GM12878 (cell line): ENCODE measurements at regions of chr20 and their contacts with region 1.

Region 1: GRCh38 chr20:53891306-53891944 is 179.0 kb downstream of the BCAS1 start:
- DNase-seq: no peak
- ATAC-seq: no peak
- H3K4me3 ChIP-seq: no peak overlapping the region
- H3K27ac ChIP-seq: no peak overlapping the region
- H3K4me1 ChIP-seq: peaks cover 25% of the 10 kb centered on the region
- H3K27me3 ChIP-seq: no peaks in the 10 kb centered on the region
- CTCF ChIP-seq: no peak
- EP300 ChIP-seq: no peak
- POLR2A ChIP-seq: no peak
- RAD21 ChIP-seq: no peak

Region 2: GRCh38 chr20:53905019-53905847 is 13.8 kb after region 1 on chr20:
- CTCF ChIA-PET with region 1: interaction called, 18 read pairs
- POLR2A ChIA-PET with region 1: interaction called, 24 read pairs
- RAD21 ChIA-PET with region 1: interaction called, 59 read pairs
- SMC1A ChIA-PET with region 1: interaction called, 53 read pairs
- in situ Hi-C with region 1: no loop called
- intact Hi-C with region 1: loop called (anchors 2 kb)
- DNase-seq: no peak
- ATAC-seq: peak; percentile 51
- H3K4me3 ChIP-seq: 0 out of 2 replicates have a peak overlapping the region, but pooled peaks have one; percentile 15
- H3K27ac ChIP-seq: peak overlapping the region; percentile 72
- H3K4me1 ChIP-seq: peaks cover 43% of the 10 kb centered on the region
- H3K27me3 ChIP-seq: no peaks in the 10 kb centered on the region
- CTCF ChIP-seq: no peak
- EP300 ChIP-seq: peak in 1 of 2 experiments; percentile 50; a peak in 1 of 4 replicates
- POLR2A ChIP-seq: no peak
- RAD21 ChIP-seq: no peak

Region 3: GRCh38 chr20:53910351-53911002 is 19.1 kb after region 1 on chr20:
- CTCF ChIA-PET with region 1: interaction called, 18 read pairs
- POLR2A ChIA-PET with region 1: interaction called, 24 read pairs
- RAD21 ChIA-PET with region 1: interaction called, 59 read pairs
- SMC1A ChIA-PET with region 1: interaction called, 53 read pairs
- in situ Hi-C with region 1: no loop called
- intact Hi-C with region 1: loop called (anchors 1 kb)
- DNase-seq: no peak
- ATAC-seq: no peak
- H3K4me3 ChIP-seq: no peak overlapping the region
- H3K27ac ChIP-seq: no peak overlapping the region
- H3K4me1 ChIP-seq: peaks cover 27% of the 10 kb centered on the region
- H3K27me3 ChIP-seq: no peaks in the 10 kb centered on the region
- CTCF ChIP-seq: no peak
- EP300 ChIP-seq: no peak
- POLR2A ChIP-seq: no peak
- RAD21 ChIP-seq: no peak